ENCODE measurements at regions of chr1 and their contacts with region 1.

Region 1: GRCh38 chr1:27300341-27301051 is 21.5 kb upstream of the TMEM222 start:
- DNase-seq: peak; percentile 86

Region 2: DNA sequence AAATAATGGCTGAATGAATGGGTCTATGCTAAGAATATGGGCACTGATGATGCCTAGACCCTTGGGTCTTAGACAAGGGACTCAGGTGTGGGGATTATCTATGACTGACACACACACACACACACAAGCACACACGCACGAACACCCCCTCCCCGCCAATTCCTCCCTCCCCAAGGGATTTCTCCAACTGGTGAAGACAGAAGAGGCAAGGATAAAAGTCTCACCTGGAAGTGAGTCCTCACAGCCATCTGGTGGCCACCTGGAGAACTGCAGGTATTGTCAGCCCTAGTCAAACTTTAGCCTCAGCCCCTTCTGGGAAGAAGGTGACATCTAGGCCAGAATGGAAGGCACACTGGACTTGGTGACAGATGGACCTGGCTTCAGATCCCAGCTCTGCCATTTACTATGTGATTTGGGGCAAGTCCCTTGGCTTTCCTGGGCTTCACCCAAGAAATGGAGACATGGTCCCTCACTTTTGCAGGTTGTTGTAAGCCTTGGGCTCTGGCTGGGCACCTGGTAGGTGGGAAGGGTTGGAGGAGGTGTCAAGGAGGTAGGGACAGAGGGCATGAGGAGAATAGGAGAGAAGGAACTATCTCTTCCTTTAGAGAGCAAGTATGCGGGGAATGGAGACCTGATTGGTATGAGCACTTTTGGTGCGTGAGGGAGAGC is 88.0 kb after region 1 on chr1:
- CTCF ChIA-PET with region 1: interaction called, 10 read pairs
- POLR2A ChIA-PET with region 1: no interaction called
- DNase-seq: peak; percentile 64

Region 3: DNA sequence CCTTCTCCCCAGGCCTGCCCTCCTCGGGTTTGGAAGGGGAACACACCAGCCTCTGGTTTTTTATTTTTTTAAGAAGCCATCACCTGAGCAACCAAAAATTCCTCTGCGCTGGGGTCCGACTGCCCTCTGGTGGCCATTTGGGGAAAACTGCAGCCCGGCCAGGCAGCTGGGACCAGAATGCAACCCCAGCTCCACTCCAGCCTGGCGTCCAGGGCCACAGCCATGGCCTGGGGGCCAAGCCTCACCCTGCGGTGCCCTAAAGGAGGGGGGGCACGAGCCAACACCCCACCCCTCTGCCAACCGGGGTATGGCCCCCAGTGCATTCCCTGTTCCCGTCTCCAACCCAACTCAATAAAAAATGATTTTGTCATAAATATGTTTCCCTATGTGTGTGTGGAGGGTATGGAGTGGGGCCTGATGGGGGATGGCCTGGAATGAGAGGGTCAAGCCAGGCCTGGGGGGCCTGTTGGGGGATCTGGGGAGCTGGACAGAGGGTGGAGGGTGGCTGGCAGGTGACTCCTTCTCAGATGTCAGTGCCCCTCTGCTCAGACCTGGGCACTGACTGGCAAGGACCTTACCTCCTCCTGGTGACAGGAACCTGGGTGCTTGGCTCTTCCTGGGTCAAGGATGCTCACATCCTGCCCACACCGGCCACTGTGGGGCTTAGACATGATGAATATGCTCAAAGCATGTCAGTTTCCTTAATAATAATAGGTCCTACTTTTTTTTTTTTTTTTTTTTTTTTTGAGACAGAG is 95.1 kb after region 1 on chr1:
- CTCF ChIA-PET with region 1: interaction called, 15 read pairs
- POLR2A ChIA-PET with region 1: no interaction called
- DNase-seq: peak; percentile 86

Region 4: DNA sequence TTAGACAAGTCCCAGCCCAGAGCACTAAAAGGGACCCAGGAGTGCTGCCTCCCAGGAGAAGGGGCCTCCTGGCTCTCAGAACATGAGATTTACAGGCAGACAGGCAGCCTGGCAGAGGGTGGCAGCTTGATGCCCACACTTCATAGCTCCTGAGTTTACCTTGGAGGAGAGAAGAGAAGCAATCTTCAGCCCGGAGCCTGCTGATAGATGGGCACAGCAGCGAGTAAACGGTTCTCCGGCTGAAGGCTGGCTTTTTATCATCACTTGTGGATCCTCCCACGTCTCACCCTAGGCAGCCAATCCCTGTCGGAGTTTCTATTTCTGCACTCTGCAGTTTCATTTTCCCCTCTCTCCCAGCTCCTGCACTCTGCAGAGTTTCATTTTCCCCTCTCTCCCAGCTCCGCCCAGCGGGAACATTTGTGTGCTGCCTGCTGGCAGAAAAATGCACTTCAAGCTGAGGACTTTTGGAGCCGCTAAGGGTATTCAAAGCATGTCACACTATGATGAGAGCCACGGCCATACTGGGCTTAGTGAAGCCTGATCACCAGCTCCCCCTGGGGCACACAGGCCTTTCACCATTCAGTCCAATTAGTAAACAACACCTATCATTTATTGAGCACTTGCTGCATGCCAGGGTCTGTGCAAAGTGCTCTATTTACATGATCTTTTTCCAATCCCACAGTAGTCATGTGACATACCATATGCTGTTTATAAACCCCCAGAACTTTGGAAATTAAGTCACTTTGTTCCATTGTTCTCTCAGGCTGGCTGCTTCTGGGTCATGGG is 371.7 kb after region 1 on chr1 and contains the start of gene IFI6:
- CTCF ChIA-PET with region 1: no interaction called
- POLR2A ChIA-PET with region 1: no interaction called
- DNase-seq: peak; percentile 84

Measured in HEK293T (cell line).